ENCODE measurements at regions of chr15 and their contacts with region 1.

Region 1: DNA sequence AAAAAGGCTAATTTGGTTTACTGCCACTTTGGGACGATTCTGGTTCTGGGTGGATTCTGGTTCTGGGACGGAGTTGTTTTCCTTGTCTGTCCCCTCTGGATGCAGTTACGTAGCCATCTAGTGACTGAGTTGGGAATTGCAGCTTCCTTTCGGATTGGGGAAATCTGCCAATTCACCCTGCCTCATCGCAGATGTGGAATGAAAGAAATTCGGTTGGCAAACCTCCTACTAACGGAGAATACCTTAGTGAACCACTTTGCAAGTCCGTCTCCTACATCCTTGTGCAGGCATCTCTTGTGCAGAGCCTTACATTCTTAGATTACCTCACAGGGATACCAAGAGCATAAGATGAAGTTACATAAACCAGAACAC is 31.5 kb upstream of the AP4E1 start:
- DNase-seq: peak; percentile 61
- CTCF ChIP-seq: peak; percentile 94

Region 2: GRCh38 chr15:50783406-50783805 is 93.6 kb before region 1 on chr15:
- CTCF ChIA-PET with region 1: no interaction called
- POLR2A ChIA-PET with region 1: no interaction called
- DNase-seq: no peak
- CTCF ChIP-seq: no peak

Region 3: DNA sequence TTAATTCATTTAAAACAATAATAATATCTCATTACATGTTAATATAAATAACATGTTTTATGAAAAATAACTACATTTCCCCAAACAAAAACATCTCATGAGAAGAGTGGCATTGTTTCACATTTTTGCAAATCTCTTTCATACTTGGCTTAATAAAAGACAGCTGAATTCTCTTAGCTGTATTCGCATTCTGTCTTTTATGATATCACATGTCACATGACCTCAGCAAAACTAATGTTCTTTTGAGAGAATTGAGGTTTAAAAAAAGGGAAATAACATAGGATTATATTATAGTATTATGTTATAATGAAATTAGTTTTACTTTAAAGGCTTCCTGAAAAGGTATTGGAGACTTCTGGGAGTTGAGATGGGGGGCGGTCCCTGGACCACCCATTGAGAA is 63.1 kb before region 1 on chr15:
- CTCF ChIA-PET with region 1: no interaction called
- POLR2A ChIA-PET with region 1: no interaction called
- DNase-seq: no peak
- CTCF ChIP-seq: no peak

Region 4: GRCh38 chr15:50825946-50826345 is 51.0 kb before region 1 on chr15:
- CTCF ChIA-PET with region 1: no interaction called
- POLR2A ChIA-PET with region 1: no interaction called
- DNase-seq: no peak
- CTCF ChIP-seq: no peak

Region 5: DNA sequence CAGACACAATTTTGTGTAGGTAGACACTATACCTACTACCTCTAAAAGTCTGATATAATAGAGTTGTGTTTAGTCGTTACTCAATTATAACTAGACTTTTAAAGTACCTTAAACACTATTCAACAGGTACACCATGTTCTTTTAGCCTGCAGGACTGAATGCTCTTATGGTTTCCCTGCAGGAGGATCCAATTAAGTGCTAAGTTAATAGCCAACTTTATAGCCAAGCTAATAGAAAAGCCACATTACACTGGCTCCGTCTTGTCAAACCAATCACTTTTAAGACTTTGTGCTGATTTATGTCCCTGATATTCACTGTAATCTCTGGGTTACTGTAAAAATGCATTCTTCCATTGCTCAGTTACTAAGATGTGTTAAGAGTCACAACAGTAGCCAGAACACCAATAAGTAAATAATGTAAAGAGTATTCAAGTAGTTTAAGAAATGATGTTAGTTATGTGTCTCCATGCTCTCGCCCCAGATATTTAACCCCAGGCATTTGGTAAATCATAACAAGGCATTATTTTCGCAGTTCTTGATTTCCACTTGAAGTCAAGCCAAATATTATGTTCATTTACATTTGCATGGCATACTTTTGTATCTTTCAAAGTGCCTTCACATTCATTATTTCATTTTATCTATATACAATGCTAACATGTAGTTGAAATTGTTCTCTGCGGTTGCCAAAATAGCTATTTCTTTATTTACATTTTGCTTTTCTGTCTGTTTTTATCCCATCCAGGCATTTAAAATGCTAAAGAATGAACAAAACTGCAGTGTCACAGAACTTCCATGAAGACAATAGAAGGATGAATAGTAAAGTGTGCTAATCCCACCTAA is 11.2 kb before region 1 on chr15:
- CTCF ChIA-PET with region 1: interaction called, 18 read pairs
- POLR2A ChIA-PET with region 1: interaction called, 5 read pairs
- DNase-seq: no peak
- CTCF ChIP-seq: no peak

Region 6: DNA sequence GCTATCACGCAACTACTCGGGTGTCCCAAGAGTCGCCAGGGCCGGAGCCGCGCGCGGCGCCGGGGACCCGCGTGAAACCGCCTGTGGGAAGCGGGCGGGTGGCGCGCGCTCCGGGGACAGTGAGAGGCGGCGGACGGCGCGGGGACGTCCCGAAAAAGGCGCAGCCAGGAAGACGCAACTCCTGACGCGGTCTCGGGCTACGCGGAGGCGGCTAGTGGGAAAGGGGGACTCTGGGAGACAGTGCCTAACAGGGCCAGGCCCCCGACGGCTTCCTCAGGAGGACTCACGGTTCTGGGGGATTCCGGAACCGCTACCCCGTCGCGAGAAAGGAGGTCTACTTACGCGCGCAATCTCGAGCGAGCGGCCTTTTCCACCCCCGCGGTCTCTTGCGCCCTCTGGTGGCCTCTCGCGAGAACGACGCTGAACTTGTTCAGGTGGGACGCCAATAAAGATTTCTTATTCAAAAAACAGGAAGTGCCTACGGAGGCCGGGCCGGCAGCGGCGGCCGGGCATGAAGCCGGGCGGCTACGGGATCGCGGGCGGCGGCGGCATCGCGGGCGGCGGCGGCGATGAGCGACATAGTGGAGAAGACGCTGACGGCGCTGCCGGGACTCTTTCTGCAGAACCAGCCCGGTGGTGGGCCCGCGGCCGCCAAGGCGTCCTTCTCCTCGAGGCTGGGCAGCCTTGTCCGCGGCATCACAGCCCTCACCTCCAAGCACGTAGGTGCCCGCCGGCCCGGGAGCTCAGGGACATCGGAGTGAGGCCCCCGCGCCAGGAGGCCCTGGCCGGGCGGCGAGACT is 31.4 kb after region 1 on chr15 and contains the start of gene AP4E1:
- CTCF ChIA-PET with region 1: interaction called, 10 read pairs
- POLR2A ChIA-PET with region 1: interaction called, 4 read pairs
- DNase-seq: peak; percentile 87
- CTCF ChIP-seq: peak; percentile 90